Dorsolateral prefrontal cortex (tissue), 120 donors: ENCODE measurements at regions of chr6 and their contacts with region 1.

Region 1: GRCh38 chr6:155174576-155175211 is 89.1 kb upstream of the CLDN20 start:
- DNase-seq: peak in 9 of 10 donors; percentile 49 to 77 (median 56)
- H3K4me3 ChIP-seq: peak overlapping the region in 1 of 59 donors; percentile 8
- H3K27ac ChIP-seq: peak overlapping the region in 27 of 59 donors; percentile 2 to 64 (median 31)
- H3K27me3 ChIP-seq: no peaks in the 10 kb centered on the region
- CTCF ChIP-seq: peak in 55 of 56 donors; percentile 26 to 88 (median 75)

Region 2: GRCh38 chr6:154868143-154868594 is 306.5 kb before region 1 on chr6:
- intact Hi-C with region 1: loop called (anchors 1 to 5 kb)
- DNase-seq: no peak
- H3K4me3 ChIP-seq: no peak overlapping the region
- H3K27ac ChIP-seq: no peak overlapping the region
- H3K27me3 ChIP-seq: no peaks in the 10 kb centered on the region
- CTCF ChIP-seq: peak; percentile 59 to 88 (median 76)

Region 3: GRCh38 chr6:154928325-154928922 is 246.3 kb before region 1 on chr6:
- intact Hi-C with region 1: loop called (anchors 2 to 5 kb)
- DNase-seq: peak in 6 of 10 donors; percentile 37 to 69 (median 49)
- H3K4me3 ChIP-seq: no peak overlapping the region
- H3K27ac ChIP-seq: no peak overlapping the region
- H3K27me3 ChIP-seq: no peaks in the 10 kb centered on the region
- CTCF ChIP-seq: peak; percentile 65 to 91 (median 78)

Region 4: GRCh38 chr6:155248008-155249001 is 73.6 kb after region 1 on chr6:
- intact Hi-C with region 1: loop called (anchors 2 to 5 kb)
- DNase-seq: peak in 8 of 10 donors; percentile 35 to 81 (median 68)
- H3K4me3 ChIP-seq: peak overlapping the region in 7 of 59 donors; percentile 1 to 40 (median 22)
- H3K27ac ChIP-seq: peak overlapping the region in 45 of 59 donors; percentile 3 to 86 (median 55)
- H3K27me3 ChIP-seq: no peaks in the 10 kb centered on the region
- CTCF ChIP-seq: peak; percentile 34 to 87 (median 79)

Region 5: DNA sequence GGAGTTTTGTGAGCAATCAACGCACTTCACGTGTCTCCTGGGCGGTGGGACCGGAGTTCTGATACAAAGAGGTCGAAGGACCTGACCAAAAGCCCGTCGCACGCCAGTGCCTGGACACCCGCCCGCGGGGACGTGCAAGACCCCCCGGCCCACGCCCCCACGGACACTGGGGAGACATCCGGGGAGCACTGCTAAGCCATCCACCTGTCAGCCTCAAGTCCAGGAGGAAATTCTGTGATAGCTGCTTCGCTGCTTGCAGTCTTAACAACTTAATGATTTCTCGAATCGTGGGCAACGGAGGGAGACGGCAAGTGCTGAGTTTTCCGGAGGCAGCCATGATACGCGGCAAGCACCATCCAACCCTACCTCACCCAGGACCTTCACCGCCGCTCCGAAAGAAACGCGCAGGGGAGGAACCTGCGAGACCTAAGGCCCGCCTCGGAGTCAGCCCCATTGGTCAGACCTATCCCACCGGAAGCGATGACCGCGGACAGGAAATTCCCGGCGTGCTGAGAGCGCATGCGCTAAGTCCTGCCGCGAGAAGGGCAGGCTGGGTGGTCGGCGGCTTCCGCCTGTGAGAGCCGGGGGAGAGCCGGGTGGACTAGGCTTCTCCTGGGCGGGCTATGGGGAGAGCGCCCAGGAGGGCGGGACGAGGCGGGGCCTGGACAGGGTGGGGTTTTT is 139.5 kb after region 1 on chr6 and contains the start of gene TFB1M:
- intact Hi-C with region 1: loop called (anchors 5 to 10 kb)
- DNase-seq: peak; percentile 95 to 99 (median 98)
- H3K4me3 ChIP-seq: peak within 1 kb of the TSS; percentile 60 to 99 (median 85)
- H3K27ac ChIP-seq: peak within 1 kb of the TSS; percentile 38 to 97 (median 89)
- H3K27me3 ChIP-seq: no peaks in the 10 kb centered on the region
- CTCF ChIP-seq: peak in 27 of 56 donors; percentile 3 to 53 (median 20)
- total RNA-seq, gene TFB1M: 16.1 to 42.1 (median 25.9) TPM